ENCODE measurements at regions of chr3 and their contacts with region 1.

Region 1: GRCh38 chr3:52934630-52935530 is 37.5 kb upstream of the STIMATE start:
- DNase-seq: peak in 3 of 5 donors; percentile 27 to 34 (median 32)
- ATAC-seq: peak in 3 of 4 donors; percentile 65 to 85 (median 82)
- H3K4me3 ChIP-seq: no peak overlapping the region
- H3K27ac ChIP-seq: no peak overlapping the region
- H3K4me1 ChIP-seq: peaks cover 0 to 5% (median 0%) of the 10 kb centered on the region in 12 donors
- H3K27me3 ChIP-seq: no peaks in the 10 kb centered on the region
- CTCF ChIP-seq: peak; percentile 59 to 84 (median 70)
- POLR2A ChIP-seq: no peak

Region 2: DNA sequence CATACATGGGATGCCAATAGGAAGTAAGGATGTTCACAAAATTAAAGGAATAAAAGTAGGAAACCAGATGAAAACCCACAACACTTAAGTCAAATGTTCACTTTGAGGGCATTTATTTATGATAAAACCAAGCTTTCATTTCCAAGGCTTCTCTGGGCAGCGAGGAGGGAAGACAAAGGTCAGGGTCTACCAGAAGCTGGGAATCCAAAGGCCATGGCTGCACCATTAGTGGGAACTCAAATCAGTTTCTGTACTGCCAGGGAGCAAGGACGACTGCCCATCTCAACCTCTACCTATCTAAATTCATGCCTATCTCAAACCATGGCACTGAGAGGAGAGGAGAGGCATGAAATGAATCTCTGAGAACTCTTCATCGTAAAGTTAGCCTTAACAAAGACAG is 271.8 kb before region 1 on chr3:
- intact Hi-C with region 1: no loop called
- DNase-seq: no peak
- ATAC-seq: no peak
- H3K4me3 ChIP-seq: no peak overlapping the region
- H3K27ac ChIP-seq: no peak overlapping the region
- H3K4me1 ChIP-seq: no peaks in the 10 kb centered on the region
- H3K27me3 ChIP-seq: no peaks in the 10 kb centered on the region
- CTCF ChIP-seq: no peak
- POLR2A ChIP-seq: no peak

Region 3: DNA sequence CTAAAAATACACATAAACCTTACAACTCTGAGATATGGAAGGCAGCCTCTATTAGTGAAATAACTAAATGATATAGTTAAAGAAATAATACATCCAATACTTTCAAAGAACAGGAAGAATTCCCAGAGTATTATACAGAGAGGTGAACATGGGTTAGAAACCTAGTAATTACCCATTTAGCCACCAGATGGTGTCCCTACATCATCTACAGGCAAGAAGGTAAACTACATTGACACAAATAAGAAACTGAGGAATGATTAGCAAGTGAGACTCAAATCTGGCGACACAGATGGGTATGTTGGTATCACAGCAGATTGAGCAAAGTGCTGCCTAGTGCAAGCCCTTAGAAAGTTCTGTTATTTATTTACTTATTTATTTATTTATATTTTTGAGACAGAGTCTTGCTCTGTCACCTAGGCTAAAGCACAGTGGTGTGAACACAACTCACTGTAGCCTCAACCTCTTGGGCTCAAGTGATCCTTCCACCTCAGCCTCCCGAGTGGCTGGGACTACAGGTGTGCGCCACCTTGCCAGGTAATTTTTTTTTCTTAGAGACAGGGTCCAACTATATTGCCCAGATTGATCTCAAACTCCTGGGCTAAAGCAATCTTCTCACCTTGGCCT is 192.3 kb before region 1 on chr3:
- intact Hi-C with region 1: loop called in 6 of 10 experiments (anchors 5 to 10 kb)
- DNase-seq: no peak
- ATAC-seq: peak in 2 of 4 donors; percentile 34 to 46
- H3K4me3 ChIP-seq: no peak overlapping the region
- H3K27ac ChIP-seq: no peak overlapping the region
- H3K4me1 ChIP-seq: no peaks in the 10 kb centered on the region
- H3K27me3 ChIP-seq: no peaks in the 10 kb centered on the region
- CTCF ChIP-seq: peak; percentile 27 to 64 (median 60)
- POLR2A ChIP-seq: no peak

Region 4: GRCh38 chr3:52770496-52771333 is 164.2 kb before region 1 on chr3 and contains the start of gene NEK4:
- intact Hi-C with region 1: loop called in 2 of 10 experiments (anchors 10 kb)
- DNase-seq: peak; percentile 93 to 98 (median 96)
- ATAC-seq: peak; percentile 99 to 100 (median 100)
- H3K4me3 ChIP-seq: peak within 1 kb of the TSS; percentile 69 to 96 (median 88)
- H3K27ac ChIP-seq: peak within 1 kb of the TSS; percentile 35 to 92 (median 80)
- H3K4me1 ChIP-seq: peaks cover 0 to 29% (median 12%) of the 10 kb centered on the region in 12 donors
- H3K27me3 ChIP-seq: no peaks in the 10 kb centered on the region
- CTCF ChIP-seq: peak in 1 of 12 donors; percentile 14
- POLR2A ChIP-seq: peak in 1 of 2 donors; percentile 78
- total RNA-seq, gene NEK4: 13.1 to 21.5 (median 15.2) TPM

Region 5: DNA sequence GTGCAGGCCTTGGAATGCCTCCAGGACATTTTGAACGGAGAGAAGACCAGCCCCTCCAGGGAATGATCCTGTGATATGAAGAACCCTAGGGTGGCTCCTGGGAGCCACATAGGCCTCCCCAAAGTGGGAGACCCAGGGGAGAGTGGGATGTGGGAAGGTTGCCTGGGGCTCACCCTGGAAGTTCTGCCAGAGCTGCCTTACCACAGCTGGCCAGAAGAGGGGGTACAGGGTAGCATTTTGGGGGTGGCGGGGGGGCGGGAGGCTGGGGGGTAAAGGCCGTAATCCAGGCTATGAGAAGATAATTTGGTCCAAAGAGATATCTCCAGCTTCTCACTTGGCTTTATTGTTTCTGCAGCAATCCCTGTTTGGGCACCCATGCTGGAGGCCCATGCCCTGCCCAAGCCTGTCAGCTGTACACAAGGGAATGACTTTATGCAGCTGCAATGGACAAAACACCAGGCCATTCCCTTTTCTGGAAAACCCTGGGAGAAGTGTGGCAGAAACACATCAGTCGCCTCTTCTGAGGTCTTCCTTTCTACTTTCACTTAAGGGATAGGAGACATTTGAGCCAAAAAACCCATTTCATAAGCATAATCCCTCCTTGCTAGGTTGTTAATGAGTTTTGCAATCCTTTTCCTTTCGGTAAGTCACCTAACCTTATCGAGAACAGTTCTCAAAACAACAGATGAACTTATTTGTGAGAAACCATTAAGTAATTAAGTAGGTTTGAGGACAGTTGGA is 89.0 kb before region 1 on chr3:
- intact Hi-C with region 1: loop called in 4 of 10 experiments (anchors 5 to 10 kb)
- DNase-seq: peak in 2 of 5 donors; percentile 43 to 64
- ATAC-seq: peak in 2 of 4 donors; percentile 17 to 23
- H3K4me3 ChIP-seq: peak overlapping the region in 3 of 12 donors; percentile 7 to 21 (median 13)
- H3K27ac ChIP-seq: peak overlapping the region; percentile 42 to 90 (median 72)
- H3K4me1 ChIP-seq: peaks cover 6 to 57% (median 43%) of the 10 kb centered on the region in 12 donors
- H3K27me3 ChIP-seq: no peaks in the 10 kb centered on the region
- CTCF ChIP-seq: peak; percentile 17 to 54 (median 42)
- POLR2A ChIP-seq: no peak

Region 6: GRCh38 chr3:52851348-52851747 is 83.5 kb before region 1 on chr3:
- intact Hi-C with region 1: loop called in 4 of 10 experiments (anchors 5 to 10 kb)
- DNase-seq: peak in 1 of 5 donors; percentile 20
- ATAC-seq: peak; percentile 39 to 63 (median 55)
- H3K4me3 ChIP-seq: no peak overlapping the region
- H3K27ac ChIP-seq: no peak overlapping the region
- H3K4me1 ChIP-seq: peaks cover 0 to 5% (median 0%) of the 10 kb centered on the region in 12 donors
- H3K27me3 ChIP-seq: no peaks in the 10 kb centered on the region
- CTCF ChIP-seq: peak; percentile 13 to 61 (median 44)
- POLR2A ChIP-seq: no peak

Region 7: GRCh38 chr3:53045518-53046170 is 110.8 kb after region 1 on chr3 and contains the start of gene SFMBT1:
- intact Hi-C with region 1: loop called in 1 of 10 experiments (anchors 10 kb)
- DNase-seq: peak; percentile 61 to 87 (median 77)
- ATAC-seq: peak; percentile 39 to 82 (median 78)
- H3K4me3 ChIP-seq: peak within 1 kb of the TSS; percentile 74 to 99 (median 95)
- H3K27ac ChIP-seq: peak within 1 kb of the TSS; percentile 76 to 96 (median 92)
- H3K4me1 ChIP-seq: peaks cover 0 to 32% (median 17%) of the 10 kb centered on the region in 12 donors
- H3K27me3 ChIP-seq: no peaks in the 10 kb centered on the region
- CTCF ChIP-seq: no peak
- POLR2A ChIP-seq: peak in 1 of 2 donors; percentile 24
- total RNA-seq, gene SFMBT1: 13.7 to 18.8 (median 15.5) TPM